WTC11 (cell line): ENCODE measurements at regions of chr19 and their contacts with region 1.

Region 1: GRCh38 chr19:48391107-48391986 is at the start of gene KDELR1:
- DNase-seq: peak; percentile 79
- ATAC-seq: peak; percentile 73
- H3K4me3 Mint-ChIP-seq: peak within 1 kb of the TSS; percentile 91
- H3K27ac Mint-ChIP-seq: peak within 1 kb of the TSS; percentile 60; the same call in 1 of the 2 replicates
- H3K4me1 Mint-ChIP-seq: peaks cover 31% of the 10 kb centered on the region
- H3K27me3 Mint-ChIP-seq: peaks cover 42% of the 10 kb centered on the region
- CTCF ChIP-seq: peak; percentile 79
- total RNA-seq, gene KDELR1: 207 to 226 TPM (median 223 TPM) in 3 replicates

Region 2: DNA sequence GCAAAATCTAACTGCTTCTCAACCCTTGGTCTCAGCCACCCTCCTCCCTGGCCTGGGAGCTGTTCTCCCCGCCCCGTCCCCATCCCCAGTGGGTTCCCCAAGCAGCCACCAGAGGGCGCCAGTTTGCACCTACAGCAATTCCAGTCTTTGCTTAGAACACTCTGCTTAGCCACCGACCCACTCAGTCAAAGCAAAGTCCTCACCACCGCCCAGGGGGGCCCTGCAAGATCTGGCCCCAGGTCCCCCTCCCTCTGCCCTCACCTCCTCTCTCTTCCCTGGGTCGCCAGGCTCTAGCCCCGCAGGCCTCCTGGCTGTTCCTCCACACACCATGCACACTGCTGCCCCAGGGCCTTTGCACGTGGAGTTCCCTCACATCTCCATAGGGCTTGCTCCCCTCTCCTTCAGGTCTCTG is 40.0 kb before region 1 on chr19:
- CTCF ChIA-PET with region 1: interaction called, 18 read pairs
- POLR2A ChIA-PET with region 1: interaction called, 3 read pairs
- DNase-seq: peak; percentile 90
- ATAC-seq: peak; percentile 90
- H3K4me3 Mint-ChIP-seq: no peak overlapping the region
- H3K27ac Mint-ChIP-seq: no peak overlapping the region
- H3K4me1 Mint-ChIP-seq: peaks cover 7% of the 10 kb centered on the region; the same call in 1 of the 2 replicates
- H3K27me3 Mint-ChIP-seq: no peaks in the 10 kb centered on the region; the same call in 1 of the 2 replicates
- CTCF ChIP-seq: peak; percentile 90

Region 3: GRCh38 chr19:48403606-48404005 is 12.3 kb after region 1 on chr19:
- CTCF ChIA-PET with region 1: interaction called, 92 read pairs
- POLR2A ChIA-PET with region 1: interaction called, 15 read pairs
- DNase-seq: peak; percentile 71
- ATAC-seq: peak; percentile 33
- H3K4me3 Mint-ChIP-seq: no peak overlapping the region
- H3K27ac Mint-ChIP-seq: peak overlapping the region; percentile 96
- H3K4me1 Mint-ChIP-seq: peaks cover 56% of the 10 kb centered on the region
- H3K27me3 Mint-ChIP-seq: no peaks in the 10 kb centered on the region; the same call in 1 of the 2 replicates
- CTCF ChIP-seq: no peak

Region 4: DNA sequence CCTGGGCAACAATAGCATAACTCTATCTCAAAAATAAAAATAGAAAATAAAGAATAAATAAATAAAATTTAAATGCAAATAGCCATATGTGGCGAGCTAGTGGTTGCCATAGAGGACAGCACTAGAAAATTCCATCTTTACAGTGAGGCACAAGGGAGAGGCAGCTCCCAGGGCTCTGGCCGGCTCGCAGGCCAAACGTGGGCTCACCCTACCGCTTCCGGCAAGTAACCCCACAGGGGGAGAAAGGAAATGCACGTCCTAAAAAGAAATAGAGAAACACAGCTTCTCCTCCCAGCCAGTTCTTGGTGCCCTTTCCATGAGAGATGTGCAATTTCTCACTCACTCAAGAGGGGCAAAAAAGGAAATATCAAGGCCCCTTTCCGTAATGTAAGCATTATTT is 42.0 kb after region 1 on chr19:
- CTCF ChIA-PET with region 1: interaction called, 21 read pairs
- POLR2A ChIA-PET with region 1: no interaction called
- DNase-seq: no peak
- ATAC-seq: peak; percentile 65
- H3K4me3 Mint-ChIP-seq: no peak overlapping the region
- H3K27ac Mint-ChIP-seq: no peak overlapping the region
- H3K4me1 Mint-ChIP-seq: peaks cover 7% of the 10 kb centered on the region
- H3K27me3 Mint-ChIP-seq: no peaks in the 10 kb centered on the region
- CTCF ChIP-seq: no peak

Region 5: GRCh38 chr19:48492925-48493717 is 101.8 kb after region 1 on chr19:
- CTCF ChIA-PET with region 1: interaction called, 14 read pairs
- POLR2A ChIA-PET with region 1: no interaction called
- DNase-seq: peak; percentile 99
- ATAC-seq: peak; percentile 81
- H3K4me3 Mint-ChIP-seq: peak overlapping the region; percentile 81
- H3K27ac Mint-ChIP-seq: peak overlapping the region; percentile 98
- H3K4me1 Mint-ChIP-seq: peaks cover 29% of the 10 kb centered on the region
- H3K27me3 Mint-ChIP-seq: peaks cover 35% of the 10 kb centered on the region
- CTCF ChIP-seq: no peak